Activated naive CD8-positive, alpha-beta T cell treated with anti-CD3 and anti-CD28 coated beads, Interleukin-2, amount 10 ng/mL, durations not matched to agents 7 days and 5 days (primary cell): ENCODE measurements at regions of chr1 and their contacts with region 1.

Region 1: GRCh38 chr1:11681071-11681771 is at the start of gene MAD2L2:
- DNase-seq: peak; percentile 97
- ATAC-seq: peak; percentile 82
- H3K4me3 Mint-ChIP-seq: peak within 1 kb of the TSS; percentile 92
- H3K27ac Mint-ChIP-seq: peak within 1 kb of the TSS; percentile 89
- H3K4me1 Mint-ChIP-seq: peaks cover 15% of the 10 kb centered on the region
- H3K27me3 Mint-ChIP-seq: peaks cover 16% of the 10 kb centered on the region
- total RNA-seq, gene MAD2L2: 95.4 to 103 TPM

Region 2: GRCh38 chr1:11576109-11576875 is 104.9 kb before region 1 on chr1:
- POLR2A ChIA-PET with region 1: no interaction called
- DNase-seq: no peak
- ATAC-seq: no peak
- H3K4me3 Mint-ChIP-seq: no peak overlapping the region
- H3K27ac Mint-ChIP-seq: peak overlapping the region; percentile 8
- H3K4me1 Mint-ChIP-seq: no peaks in the 10 kb centered on the region
- H3K27me3 Mint-ChIP-seq: peaks cover 11% of the 10 kb centered on the region

Region 3: GRCh38 chr1:11658308-11658941 is 22.8 kb before region 1 on chr1:
- POLR2A ChIA-PET with region 1: interaction called, 24 read pairs
- DNase-seq: no peak
- ATAC-seq: no peak
- H3K4me3 Mint-ChIP-seq: no peak overlapping the region
- H3K27ac Mint-ChIP-seq: no peak overlapping the region
- H3K4me1 Mint-ChIP-seq: peaks cover 4% of the 10 kb centered on the region
- H3K27me3 Mint-ChIP-seq: no peaks in the 10 kb centered on the region

Region 4: GRCh38 chr1:11693024-11693590 is 11.9 kb after region 1 on chr1:
- POLR2A ChIA-PET with region 1: interaction called, 16 read pairs
- DNase-seq: peak; percentile 54
- ATAC-seq: peak; percentile 71
- H3K4me3 Mint-ChIP-seq: peak overlapping the region; percentile 85
- H3K27ac Mint-ChIP-seq: peak overlapping the region; percentile 80
- H3K4me1 Mint-ChIP-seq: peaks cover 37% of the 10 kb centered on the region
- H3K27me3 Mint-ChIP-seq: peaks cover 30% of the 10 kb centered on the region